Keratinocyte (primary cell): ENCODE measurements at regions of chr20 and their contacts with region 1.

Region 1: GRCh38 chr20:23420943-23421931 is at the start of gene NAPB:
- DNase-seq: peak; percentile 54
- H3K4me3 ChIP-seq: peak within 1 kb of the TSS; percentile 79 to 97 (median 83)
- H3K27ac ChIP-seq: peak within 1 kb of the TSS; percentile 76
- H3K4me1 ChIP-seq: peaks cover 9% of the 10 kb centered on the region
- H3K27me3 ChIP-seq: no peaks in the 10 kb centered on the region
- CTCF ChIP-seq: peak in 2 of 3 experiments; percentile 7 to 58
- polyA plus RNA-seq, gene NAPB: 3.7 to 11.6 TPM (median 9.5 TPM) in 3 replicates

Region 2: GRCh38 chr20:23606652-23607049 is 185.4 kb after region 1 on chr20:
- dilution Hi-C with region 1: loop called (anchors 25 kb)
- DNase-seq: no peak
- H3K4me3 ChIP-seq: no peak overlapping the region
- H3K27ac ChIP-seq: no peak overlapping the region
- H3K4me1 ChIP-seq: no peaks in the 10 kb centered on the region
- H3K27me3 ChIP-seq: no peaks in the 10 kb centered on the region
- CTCF ChIP-seq: peak; percentile 97 to 99 (median 99)